ENCODE measurements at regions of chr6 and their contacts with region 1.

Region 1: DNA sequence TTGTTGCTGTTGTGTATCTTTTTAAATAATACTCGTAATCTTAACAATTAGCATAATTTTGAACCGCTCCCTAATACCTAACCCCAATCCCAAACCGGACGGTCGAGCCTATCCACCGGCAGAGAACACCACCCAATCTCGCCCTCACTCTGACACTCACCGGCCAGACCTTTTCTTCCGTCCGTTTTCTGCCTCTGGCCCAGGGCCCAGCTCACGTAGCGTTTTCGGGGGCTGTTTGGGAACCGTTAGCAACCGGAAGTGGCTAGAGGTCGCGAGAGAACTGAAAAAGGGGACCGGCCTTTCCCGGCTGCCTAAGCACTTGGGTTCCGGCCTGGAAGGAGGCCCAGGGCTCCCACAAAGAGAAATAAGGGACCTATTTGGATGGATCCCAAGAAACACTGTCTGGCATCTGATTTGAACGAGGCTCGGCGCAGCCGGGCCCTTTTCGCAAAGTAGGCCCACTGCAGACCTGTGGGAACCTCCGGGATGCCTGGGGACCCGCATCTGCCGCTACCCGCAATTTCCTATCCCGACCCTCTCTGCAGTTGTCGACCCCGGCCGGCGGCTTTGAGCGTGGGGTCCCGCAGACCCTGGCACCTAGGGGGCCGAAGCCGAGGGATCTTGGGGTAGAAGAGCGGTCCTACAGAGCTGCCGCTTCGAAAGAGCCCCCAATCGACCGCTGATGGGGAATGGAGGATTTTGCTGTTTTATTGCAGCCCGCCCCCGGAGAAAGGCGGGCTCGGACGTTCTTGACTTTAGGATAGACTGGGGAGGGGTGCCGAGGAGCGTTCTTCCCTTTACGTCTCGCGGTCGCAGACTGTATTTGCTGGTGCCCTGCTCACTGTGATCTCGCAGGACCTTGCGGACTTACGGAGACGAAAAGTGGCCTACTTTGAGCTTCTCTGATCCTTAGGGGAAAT is 4.8 kb upstream of the ZKSCAN8 start:
- DNase-seq: peak; percentile 98
- H3K4me3 ChIP-seq: peak overlapping the region; percentile 66 to 89 (median 73)
- H3K27ac ChIP-seq: peak overlapping the region; percentile 96 to 98 (median 96)
- H3K4me1 ChIP-seq: peaks cover 0 to 42% (median 26%) of the 10 kb centered on the region in 4 donors
- H3K27me3 ChIP-seq: no peaks in the 10 kb centered on the region
- CTCF ChIP-seq: no peak
- EP300 ChIP-seq: peak in 1 of 4 donors; percentile 21
- POLR2A ChIP-seq: no peak

Region 2: GRCh38 chr6:28080631-28081485 is 56.0 kb before region 1 on chr6:
- intact Hi-C with region 1: loop called (anchors 5 kb)
- DNase-seq: peak; percentile 97
- H3K4me3 ChIP-seq: peak overlapping the region; percentile 62 to 78 (median 71)
- H3K27ac ChIP-seq: peak overlapping the region; percentile 86 to 93 (median 91)
- H3K4me1 ChIP-seq: peaks cover 0 to 14% (median 9%) of the 10 kb centered on the region in 4 donors
- H3K27me3 ChIP-seq: no peaks in the 10 kb centered on the region
- CTCF ChIP-seq: no peak
- EP300 ChIP-seq: peak in 1 of 4 donors; percentile 43
- POLR2A ChIP-seq: peak in 1 of 2 donors; percentile 41

Region 3: DNA sequence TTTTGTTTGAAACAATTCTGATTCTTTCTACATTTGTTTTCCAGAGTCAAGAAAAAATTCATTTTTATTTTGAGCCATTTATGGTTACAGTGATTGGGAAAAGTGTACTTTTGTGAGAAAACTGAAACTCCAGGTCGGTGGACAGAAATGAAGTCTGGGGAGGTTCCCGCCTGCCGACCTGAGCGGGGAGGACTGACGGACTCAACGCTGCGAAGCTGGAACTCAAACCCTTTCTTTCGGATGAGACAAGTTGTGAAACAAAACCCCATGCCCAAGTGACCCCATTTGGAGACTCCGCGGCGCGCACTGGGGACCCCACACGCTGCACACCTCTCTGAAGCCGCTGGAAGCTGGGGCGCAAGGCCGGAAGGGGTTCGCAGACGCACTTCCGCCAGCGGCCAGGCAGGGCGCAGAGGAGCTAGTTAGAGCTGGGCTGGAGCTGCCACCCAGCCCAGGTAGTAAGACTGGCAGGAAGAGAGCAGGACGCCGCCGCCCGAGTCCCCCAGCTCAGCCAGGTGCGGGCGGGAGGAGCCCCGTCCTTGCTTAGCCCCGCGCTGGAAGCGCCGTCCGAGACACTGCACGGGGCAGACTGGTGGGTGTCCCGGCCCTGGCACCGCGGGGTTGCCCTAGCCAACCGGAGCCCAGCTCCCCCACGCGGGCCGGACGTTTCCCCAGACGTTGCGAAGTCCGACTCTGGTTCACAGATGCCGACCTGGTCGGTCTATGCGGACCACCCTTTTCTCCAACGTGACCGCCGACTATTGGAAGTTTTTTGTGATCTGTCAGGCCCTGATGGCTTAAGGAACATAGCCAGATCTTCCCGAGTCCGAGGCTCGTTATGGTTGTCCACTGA is 32.2 kb before region 1 on chr6:
- intact Hi-C with region 1: loop called (anchors 2 kb)
- DNase-seq: peak; percentile 88
- H3K4me3 ChIP-seq: peak overlapping the region; percentile 66 to 80 (median 69)
- H3K27ac ChIP-seq: peak overlapping the region; percentile 84 to 89 (median 85)
- H3K4me1 ChIP-seq: peaks cover 0 to 5% (median 2%) of the 10 kb centered on the region in 4 donors
- H3K27me3 ChIP-seq: no peaks in the 10 kb centered on the region
- CTCF ChIP-seq: peak; percentile 30 to 85 (median 72)
- EP300 ChIP-seq: no peak
- POLR2A ChIP-seq: peak; percentile 37 to 63

Region 4: GRCh38 chr6:28218271-28219248 is 81.7 kb after region 1 on chr6:
- intact Hi-C with region 1: loop called (anchors 2 kb)
- DNase-seq: peak; percentile 87
- H3K4me3 ChIP-seq: peak overlapping the region; percentile 49 to 70 (median 56)
- H3K27ac ChIP-seq: peak overlapping the region; percentile 47 to 72 (median 68)
- H3K4me1 ChIP-seq: peaks cover 0 to 16% (median 6%) of the 10 kb centered on the region in 4 donors
- H3K27me3 ChIP-seq: peaks cover 2 to 30% (median 23%) of the 10 kb centered on the region in 3 donors
- CTCF ChIP-seq: no peak
- EP300 ChIP-seq: no peak
- POLR2A ChIP-seq: no peak

Region 5: DNA sequence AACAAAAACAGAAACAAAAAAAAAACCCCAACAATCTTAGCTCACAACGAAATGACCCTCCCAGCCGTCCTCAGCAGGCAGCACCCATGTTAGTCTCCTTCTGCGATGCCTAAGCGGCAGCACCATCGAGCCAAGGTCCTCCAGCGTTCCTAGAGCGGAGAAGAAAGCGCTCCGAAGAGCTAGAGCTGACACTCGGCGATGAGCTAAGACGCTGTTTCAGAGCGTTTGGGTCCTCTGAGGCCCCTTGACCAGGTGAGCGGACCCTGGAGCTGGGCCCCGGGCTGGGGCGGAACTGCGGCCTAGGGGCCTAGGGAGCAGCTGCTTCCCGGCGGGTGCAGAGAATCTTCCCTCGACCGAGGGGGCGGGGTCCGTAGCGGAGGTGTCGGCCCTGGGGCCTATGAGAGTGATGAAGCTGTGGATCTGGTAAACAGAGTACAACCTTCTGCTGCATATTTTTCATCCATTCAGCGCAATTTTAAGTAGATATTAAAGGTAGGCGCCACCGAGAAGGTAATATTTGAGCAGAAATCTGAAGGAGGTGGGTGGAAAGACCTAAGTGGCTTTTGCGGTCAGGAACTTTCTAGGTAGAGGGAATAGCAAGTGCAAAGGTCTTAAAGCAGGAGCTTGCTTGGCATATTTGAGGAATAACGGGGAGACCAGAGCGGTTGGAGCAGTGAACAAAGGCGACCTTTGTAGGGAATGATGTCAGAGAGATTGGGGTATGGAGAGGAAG is 130.3 kb after region 1 on chr6 and contains the start of gene ZSCAN26:
- intact Hi-C with region 1: loop called (anchors 5 kb)
- DNase-seq: peak; percentile 90
- H3K4me3 ChIP-seq: peak within 1 kb of the TSS; percentile 68 to 80 (median 73)
- H3K27ac ChIP-seq: peak within 1 kb of the TSS; percentile 83 to 91 (median 88)
- H3K4me1 ChIP-seq: peaks cover 0 to 32% (median 22%) of the 10 kb centered on the region in 4 donors
- H3K27me3 ChIP-seq: no peaks in the 10 kb centered on the region
- CTCF ChIP-seq: no peak
- EP300 ChIP-seq: no peak
- POLR2A ChIP-seq: peak; percentile 52 to 55
- total RNA-seq, gene ZSCAN26: 25.5 to 29.4 (median 27.6) TPM

Region 6: DNA sequence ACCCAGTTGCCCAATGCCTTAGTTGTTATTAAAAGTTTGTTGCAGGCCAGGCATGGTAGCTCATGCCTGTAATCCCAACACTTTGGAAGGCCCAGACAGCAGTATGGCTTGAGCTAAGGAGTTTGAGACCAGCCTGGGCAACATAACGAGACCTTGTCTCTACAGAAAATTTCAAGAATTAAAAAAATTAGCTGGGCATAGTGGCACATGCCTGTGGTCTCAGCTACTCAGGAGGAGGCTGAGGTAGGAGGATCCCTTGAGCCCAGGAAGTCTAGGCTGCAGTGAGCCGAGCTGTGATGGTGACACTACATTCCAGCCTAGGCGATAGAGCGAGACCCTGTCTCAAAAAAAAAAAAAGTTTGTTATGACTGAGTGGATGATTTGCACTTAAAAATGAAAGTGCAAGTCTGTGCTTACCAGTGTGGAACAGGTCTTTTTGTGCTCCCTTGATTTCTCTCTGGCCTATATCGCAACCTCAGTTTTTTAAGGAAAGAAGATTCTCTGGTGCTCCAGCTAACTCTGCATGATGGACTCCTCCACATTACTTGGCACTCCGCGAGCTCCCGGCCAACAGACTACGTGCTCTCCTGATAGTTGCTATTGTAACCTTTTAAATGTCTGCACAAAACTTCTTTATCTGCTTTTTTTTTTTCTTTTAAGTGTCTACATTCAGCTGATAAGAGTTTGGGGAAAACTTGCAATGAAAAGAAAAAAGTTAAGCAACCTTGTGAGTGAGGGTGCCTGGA is 235.0 kb after region 1 on chr6:
- intact Hi-C with region 1: no loop called
- DNase-seq: no peak
- H3K4me3 ChIP-seq: no peak overlapping the region
- H3K27ac ChIP-seq: no peak overlapping the region
- H3K4me1 ChIP-seq: no peaks in the 10 kb centered on the region
- H3K27me3 ChIP-seq: no peaks in the 10 kb centered on the region
- CTCF ChIP-seq: no peak
- EP300 ChIP-seq: no peak
- POLR2A ChIP-seq: no peak

Region 7: GRCh38 chr6:28399350-28400121 is 262.7 kb after region 1 on chr6 and contains the start of gene ZSCAN12:
- intact Hi-C with region 1: loop called (anchors 5 kb)
- DNase-seq: peak; percentile 90
- H3K4me3 ChIP-seq: peak within 1 kb of the TSS; percentile 65 to 79 (median 72)
- H3K27ac ChIP-seq: peak within 1 kb of the TSS; percentile 45 to 73 (median 63)
- H3K4me1 ChIP-seq: peaks cover 0 to 26% (median 25%) of the 10 kb centered on the region in 4 donors
- H3K27me3 ChIP-seq: no peaks in the 10 kb centered on the region
- CTCF ChIP-seq: peak in 2 of 4 experiments; percentile 36 to 47
- EP300 ChIP-seq: no peak
- POLR2A ChIP-seq: no peak
- total RNA-seq, gene ZSCAN12: 6.1 to 7.5 (median 6.8) TPM

Measured in sigmoid colon (tissue), 7 donors.